ENCODE measurements at regions of chr2 and their contacts with region 1.

Region 1: GRCh38 chr2:234135720-234136221 is 85.3 kb downstream of the SPP2 start:
- DNase-seq: peak; percentile 73
- H3K27ac ChIP-seq: peak overlapping the region; percentile 65
- CTCF ChIP-seq: peak; percentile 80

Region 2: GRCh38 chr2:234500394-234501006 is 364.7 kb after region 1 on chr2:
- CTCF ChIA-PET with region 1: interaction called, 17 read pairs
- POLR2A ChIA-PET with region 1: interaction called, 7 read pairs
- DNase-seq: peak; percentile 39
- H3K27ac ChIP-seq: peak overlapping the region; percentile 11; the same call in 1 of the 2 replicates
- CTCF ChIP-seq: peak; percentile 69

Region 3: GRCh38 chr2:234544659-234545611 is 409.2 kb after region 1 on chr2:
- CTCF ChIA-PET with region 1: interaction called, 10 read pairs
- POLR2A ChIA-PET with region 1: no interaction called
- DNase-seq: peak; percentile 60
- H3K27ac ChIP-seq: no peak overlapping the region
- CTCF ChIP-seq: peak; percentile 87